ENCODE measurements at regions of chr7 and their contacts with region 1.

Region 1: DNA sequence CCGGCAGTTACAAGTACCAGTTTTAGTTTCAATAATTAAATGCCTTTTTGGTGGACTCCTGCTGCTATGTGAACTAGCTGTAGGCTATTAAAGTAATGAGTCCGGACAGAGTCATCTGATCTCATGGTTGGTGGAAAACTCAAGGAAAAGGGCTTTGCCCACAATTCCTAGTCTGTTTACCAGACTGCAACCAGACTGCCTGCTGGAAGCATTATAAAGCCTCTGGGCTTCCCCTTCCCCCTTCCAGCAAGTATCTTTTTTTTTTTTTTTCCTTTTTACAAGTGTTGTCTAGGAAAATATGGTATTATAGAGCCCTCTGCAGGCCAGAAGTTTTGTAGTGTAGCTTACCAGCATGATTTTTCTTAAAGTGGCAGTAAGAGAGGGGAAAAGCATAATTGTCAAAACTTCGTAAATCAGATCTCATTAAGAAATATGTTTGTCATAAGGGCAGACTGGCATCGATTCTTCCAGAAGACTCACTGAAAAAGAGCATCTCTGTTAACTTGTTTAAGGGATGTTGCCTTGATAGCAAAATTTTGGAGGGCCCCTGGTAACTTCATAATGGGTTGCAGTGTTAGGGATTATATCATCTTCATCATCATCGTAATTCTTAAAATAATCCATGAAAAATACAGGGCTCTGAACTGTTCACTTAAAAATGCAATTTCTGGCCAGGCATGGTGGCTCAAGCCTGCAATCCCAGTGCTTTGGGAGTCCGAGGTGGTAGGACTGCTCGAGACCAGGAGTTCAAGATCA is 181.3 kb downstream of the TAX1BP1 start:
- DNase-seq: peak; percentile 48
- ATAC-seq: peak; percentile 76
- H3K4me3 ChIP-seq: no peak overlapping the region
- H3K27ac ChIP-seq: no peak overlapping the region
- H3K4me1 ChIP-seq: peaks cover 7% of the 10 kb centered on the region
- H3K27me3 ChIP-seq: no peaks in the 10 kb centered on the region
- CTCF ChIP-seq: peak; percentile 43 to 71 (median 53); a peak in 5 of 6 replicates
- EP300 ChIP-seq: no peak
- POLR2A ChIP-seq: no peak
- RAD21 ChIP-seq: peak; percentile 84

Region 2: DNA sequence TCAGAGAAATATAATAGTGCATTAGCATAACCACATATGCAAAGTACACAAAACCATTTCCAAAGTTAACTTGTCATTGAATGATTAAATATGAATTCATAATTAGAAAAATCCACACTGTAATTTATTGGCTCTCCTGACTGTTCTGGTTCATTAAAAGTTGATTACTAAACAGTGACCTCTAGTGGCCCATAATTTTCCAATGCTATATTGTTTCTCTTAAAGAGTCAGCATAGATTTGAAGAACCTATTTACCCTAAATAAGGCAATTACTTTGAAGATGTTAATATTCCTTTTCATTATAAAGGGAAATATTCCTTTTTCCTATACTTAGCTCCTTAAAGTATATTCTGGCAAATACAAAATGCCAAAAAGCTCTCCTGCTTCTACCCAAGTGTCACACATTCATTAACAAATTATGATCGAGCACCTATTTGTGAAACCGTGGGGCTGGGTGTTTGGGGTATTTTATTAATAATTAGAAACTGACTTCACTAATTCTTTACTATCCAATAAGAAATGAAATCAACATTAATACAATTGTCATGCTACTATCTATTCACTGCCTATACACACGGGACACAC is 344.8 kb before region 1 on chr7:
- CTCF ChIA-PET with region 1: interaction called, 7 read pairs
- POLR2A ChIA-PET with region 1: no interaction called
- RAD21 ChIA-PET with region 1: interaction called, 4 read pairs
- SMC1A ChIA-PET with region 1: interaction called, 3 read pairs
- in situ Hi-C with region 1: no loop called
- intact Hi-C with region 1: loop called (anchors 5 kb)
- DNase-seq: no peak
- ATAC-seq: peak; percentile 76
- H3K4me3 ChIP-seq: no peak overlapping the region
- H3K27ac ChIP-seq: no peak overlapping the region
- H3K4me1 ChIP-seq: no peaks in the 10 kb centered on the region
- H3K27me3 ChIP-seq: no peaks in the 10 kb centered on the region
- CTCF ChIP-seq: peak; percentile 48 to 55 (median 53); a peak in 5 of 6 replicates
- EP300 ChIP-seq: no peak
- POLR2A ChIP-seq: no peak
- RAD21 ChIP-seq: peak; percentile 59

Region 3: GRCh38 chr7:27689591-27690164 is 231.6 kb before region 1 on chr7:
- CTCF ChIA-PET with region 1: interaction called, 19 read pairs
- POLR2A ChIA-PET with region 1: no interaction called
- RAD21 ChIA-PET with region 1: no interaction called
- SMC1A ChIA-PET with region 1: interaction called, 5 read pairs
- in situ Hi-C with region 1: no loop called
- intact Hi-C with region 1: loop called (anchors 2 kb)
- DNase-seq: no peak
- ATAC-seq: peak; percentile 83
- H3K4me3 ChIP-seq: no peak overlapping the region
- H3K27ac ChIP-seq: no peak overlapping the region
- H3K4me1 ChIP-seq: no peaks in the 10 kb centered on the region
- H3K27me3 ChIP-seq: no peaks in the 10 kb centered on the region
- CTCF ChIP-seq: peak; percentile 42 to 69 (median 43); a peak in 5 of 6 replicates
- EP300 ChIP-seq: no peak
- POLR2A ChIP-seq: no peak
- RAD21 ChIP-seq: peak; percentile 53

Region 4: GRCh38 chr7:27774717-27775328 is 146.4 kb before region 1 on chr7:
- CTCF ChIA-PET with region 1: interaction called, 33 read pairs
- POLR2A ChIA-PET with region 1: no interaction called
- RAD21 ChIA-PET with region 1: interaction called, 9 read pairs
- SMC1A ChIA-PET with region 1: interaction called, 26 read pairs
- in situ Hi-C with region 1: no loop called
- intact Hi-C with region 1: loop called (anchors 5 kb)
- DNase-seq: no peak
- ATAC-seq: peak; percentile 52; the same call in 1 of the 3 replicates
- H3K4me3 ChIP-seq: no peak overlapping the region
- H3K27ac ChIP-seq: no peak overlapping the region
- H3K4me1 ChIP-seq: no peaks in the 10 kb centered on the region
- H3K27me3 ChIP-seq: no peaks in the 10 kb centered on the region
- CTCF ChIP-seq: peak; percentile 57 to 61 (median 57); a peak in 5 of 6 replicates
- EP300 ChIP-seq: no peak
- POLR2A ChIP-seq: no peak
- RAD21 ChIP-seq: peak; percentile 50

Region 5: GRCh38 chr7:27842094-27842692 is 79.1 kb before region 1 on chr7:
- CTCF ChIA-PET with region 1: interaction called, 6 read pairs
- POLR2A ChIA-PET with region 1: no interaction called
- RAD21 ChIA-PET with region 1: no interaction called
- SMC1A ChIA-PET with region 1: interaction called, 3 read pairs
- in situ Hi-C with region 1: no loop called
- intact Hi-C with region 1: loop called (anchors 5 kb)
- DNase-seq: no peak
- ATAC-seq: no peak
- H3K4me3 ChIP-seq: no peak overlapping the region
- H3K27ac ChIP-seq: no peak overlapping the region
- H3K4me1 ChIP-seq: no peaks in the 10 kb centered on the region
- H3K27me3 ChIP-seq: no peaks in the 10 kb centered on the region
- CTCF ChIP-seq: no peak
- EP300 ChIP-seq: no peak
- POLR2A ChIP-seq: no peak
- RAD21 ChIP-seq: no peak

Region 6: DNA sequence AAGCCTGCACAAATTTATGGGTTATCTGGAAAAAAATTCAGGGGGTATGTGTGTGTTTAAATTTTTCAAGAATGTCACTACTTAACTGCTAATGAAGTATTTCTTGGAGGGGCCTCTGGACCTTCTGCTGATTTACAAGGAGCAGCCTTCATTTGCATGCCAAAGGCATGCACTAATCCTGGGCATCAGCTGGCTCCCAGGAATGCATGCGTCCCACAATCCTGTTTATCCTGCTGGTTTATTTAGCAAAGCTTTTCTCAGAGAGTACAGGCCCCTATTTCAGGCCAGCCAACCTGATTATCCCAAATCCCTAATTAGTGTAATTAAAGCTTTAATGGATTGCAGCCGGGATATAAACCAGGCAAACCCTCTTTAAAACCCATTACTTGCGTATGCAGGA is 10.9 kb before region 1 on chr7:
- CTCF ChIA-PET with region 1: interaction called, 9 read pairs
- POLR2A ChIA-PET with region 1: no interaction called
- RAD21 ChIA-PET with region 1: interaction called, 5 read pairs
- SMC1A ChIA-PET with region 1: interaction called, 44 read pairs
- in situ Hi-C with region 1: no loop called
- intact Hi-C with region 1: no loop called
- DNase-seq: no peak
- ATAC-seq: no peak
- H3K4me3 ChIP-seq: no peak overlapping the region
- H3K27ac ChIP-seq: no peak overlapping the region
- H3K4me1 ChIP-seq: no peaks in the 10 kb centered on the region
- H3K27me3 ChIP-seq: peaks cover 1 to 3% of the 10 kb centered on the region in 2 experiments; a peak in 1 of 4 replicates
- CTCF ChIP-seq: no peak
- EP300 ChIP-seq: no peak
- POLR2A ChIP-seq: no peak
- RAD21 ChIP-seq: no peak

Region 7: DNA sequence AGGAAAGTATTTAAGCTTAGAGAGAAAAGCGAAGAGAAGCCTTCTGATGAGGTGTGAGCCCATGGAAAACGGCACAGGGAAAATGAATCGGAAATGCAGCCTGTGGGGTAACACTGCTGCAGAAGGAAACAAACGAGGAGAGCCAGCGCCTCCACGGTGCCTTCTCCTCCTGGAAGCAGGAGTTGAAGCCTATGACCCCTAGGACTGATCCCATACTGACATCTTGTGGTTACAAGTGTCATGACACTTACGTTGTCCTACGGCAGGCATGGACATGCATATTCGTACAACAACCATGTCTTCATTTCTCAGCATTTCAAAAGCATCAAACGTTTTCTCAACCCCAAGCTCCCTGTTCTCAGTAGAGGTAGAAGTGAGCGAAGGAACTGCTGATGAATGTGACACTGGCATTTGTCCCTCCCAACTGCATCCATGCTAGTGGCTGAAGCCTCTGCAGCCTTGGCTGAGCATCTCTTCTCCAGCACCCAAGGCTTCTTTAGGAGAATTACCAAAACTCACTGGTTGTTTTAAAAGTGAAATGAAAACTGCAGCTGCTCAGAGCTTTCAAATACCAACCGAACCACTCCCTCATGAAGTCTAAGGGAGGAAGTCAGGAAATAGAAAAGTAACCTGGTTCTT is 99.2 kb after region 1 on chr7:
- CTCF ChIA-PET with region 1: interaction called, 4 read pairs
- POLR2A ChIA-PET with region 1: no interaction called
- RAD21 ChIA-PET with region 1: interaction called, 3 read pairs
- SMC1A ChIA-PET with region 1: interaction called, 8 read pairs
- in situ Hi-C with region 1: no loop called
- intact Hi-C with region 1: loop called (anchors 2 kb)
- DNase-seq: peak; percentile 43
- ATAC-seq: peak; percentile 93
- H3K4me3 ChIP-seq: no peak overlapping the region
- H3K27ac ChIP-seq: no peak overlapping the region
- H3K4me1 ChIP-seq: no peaks in the 10 kb centered on the region
- H3K27me3 ChIP-seq: peaks cover 0 to 1% of the 10 kb centered on the region in 2 experiments; a peak in 1 of 4 replicates
- CTCF ChIP-seq: peak; percentile 82 to 93 (median 83)
- EP300 ChIP-seq: no peak
- POLR2A ChIP-seq: no peak
- RAD21 ChIP-seq: peak; percentile 89

Region 8: GRCh38 chr7:28573059-28573553 is 651.8 kb after region 1 on chr7:
- CTCF ChIA-PET with region 1: no interaction called
- POLR2A ChIA-PET with region 1: no interaction called
- RAD21 ChIA-PET with region 1: no interaction called
- SMC1A ChIA-PET with region 1: no interaction called
- in situ Hi-C with region 1: no loop called
- intact Hi-C with region 1: no loop called
- DNase-seq: no peak
- ATAC-seq: peak; percentile 40
- H3K4me3 ChIP-seq: no peak overlapping the region
- H3K27ac ChIP-seq: peak overlapping the region; percentile 29
- H3K4me1 ChIP-seq: peaks cover 23% of the 10 kb centered on the region
- H3K27me3 ChIP-seq: no peaks in the 10 kb centered on the region
- CTCF ChIP-seq: no peak
- EP300 ChIP-seq: peak in 1 of 2 experiments; percentile 9; a peak in 2 of 4 replicates
- POLR2A ChIP-seq: no peak; the same call in 1 of the 2 replicates
- RAD21 ChIP-seq: no peak